CD8-positive, alpha-beta T cell (primary cell): ENCODE measurements at regions of chr7 and their contacts with region 1.

Region 1: DNA sequence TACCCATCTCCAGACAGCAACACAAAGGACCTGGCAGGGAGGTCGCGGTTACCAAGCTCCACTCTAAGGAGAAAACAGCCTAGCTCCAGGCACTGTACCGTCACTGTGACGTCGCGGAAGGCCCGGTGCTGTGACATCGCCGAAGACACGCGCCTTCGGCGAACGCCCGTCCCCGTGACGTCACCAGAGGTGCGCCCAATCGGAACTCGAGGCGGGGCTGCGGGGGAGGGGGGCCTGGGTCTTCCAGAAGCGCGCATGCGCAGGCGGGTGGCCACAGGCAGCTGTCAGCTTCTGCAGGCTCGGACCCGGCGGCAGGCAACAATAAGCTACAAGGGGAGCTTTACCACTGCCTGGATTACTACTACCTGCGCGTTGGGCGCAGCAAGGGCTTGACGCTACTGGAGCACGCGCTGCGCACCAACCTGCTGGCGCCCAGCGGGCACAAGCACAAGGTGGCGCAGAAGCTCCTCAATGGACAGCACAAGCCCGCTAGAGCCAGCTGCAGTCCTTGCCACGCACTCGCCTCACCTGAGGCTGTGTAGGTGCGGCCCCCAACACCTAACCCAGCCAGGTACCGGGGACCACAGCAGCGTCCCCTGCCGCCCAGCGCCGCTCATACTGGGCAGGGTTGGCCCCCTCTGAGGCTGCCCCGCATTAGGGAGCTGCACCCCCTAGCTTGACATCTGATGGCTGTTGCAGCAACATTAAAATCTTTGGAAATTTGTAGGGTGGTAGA is 208.4 kb downstream of the TPST1 start:
- DNase-seq: peak; percentile 62 to 91 (median 85)
- ATAC-seq: peak; percentile 86
- H3K4me3 ChIP-seq: peak overlapping the region; percentile 56 to 62
- H3K4me3 Mint-ChIP-seq: peak overlapping the region; percentile 80
- H3K27ac ChIP-seq: peak overlapping the region; percentile 39 to 43
- H3K27ac Mint-ChIP-seq: peak overlapping the region; percentile 87
- H3K4me1 ChIP-seq: peaks cover 15% of the 10 kb centered on the region
- H3K4me1 Mint-ChIP-seq: peaks cover 12% of the 10 kb centered on the region
- H3K27me3 ChIP-seq: no peaks in the 10 kb centered on the region
- H3K27me3 Mint-ChIP-seq: no peaks in the 10 kb centered on the region
- CTCF ChIP-seq: peak; percentile 50

Region 2: DNA sequence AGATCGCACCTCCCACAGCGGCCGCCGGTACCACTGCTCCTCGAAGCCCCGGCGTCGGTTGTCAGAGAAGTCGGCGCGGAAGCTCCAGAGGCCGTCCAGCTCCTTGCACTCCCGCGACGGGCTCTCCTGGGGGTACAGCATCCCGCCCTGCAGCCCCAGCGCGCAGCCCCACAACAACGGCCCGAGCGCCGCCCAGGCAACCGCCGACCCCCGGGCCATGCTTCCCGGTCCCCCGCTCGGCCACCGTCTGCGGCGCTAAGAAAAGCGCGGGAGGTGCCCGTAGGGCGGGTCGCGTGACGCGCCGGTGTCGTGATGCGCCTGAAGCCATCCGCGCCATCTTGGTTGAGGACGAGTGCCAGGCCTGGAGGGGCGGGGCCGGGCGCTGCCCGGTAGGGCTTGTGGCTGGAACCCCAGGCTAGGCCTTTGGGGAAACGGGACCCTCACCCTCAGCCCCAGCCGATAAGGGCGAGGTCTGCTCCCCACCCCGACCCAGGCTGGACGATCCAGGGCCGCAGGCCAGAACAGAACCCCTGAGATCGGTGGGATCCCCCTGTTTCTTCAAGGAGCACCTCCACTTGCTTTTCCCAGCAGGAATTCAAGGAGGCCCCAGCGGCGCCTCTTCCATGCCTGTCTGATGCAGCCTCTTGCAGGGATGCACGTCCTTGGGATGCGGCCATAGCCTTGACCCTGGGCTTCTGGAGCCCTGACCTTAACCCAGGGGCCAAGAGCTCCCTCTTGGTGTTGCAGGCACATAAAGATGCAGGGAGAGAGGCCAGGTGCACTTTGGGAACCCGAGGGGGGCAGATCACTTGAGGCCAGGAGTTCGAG is 431.4 kb before region 1 on chr7 and contains the start of gene GUSB:
- CTCF ChIA-PET with region 1: no interaction called
- POLR2A ChIA-PET with region 1: no interaction called
- intact Hi-C with region 1: loop called in 1 of 2 experiments (anchors 10 kb)
- DNase-seq: peak; percentile 80 to 93 (median 90)
- ATAC-seq: peak; percentile 87
- H3K4me3 ChIP-seq: peak within 1 kb of the TSS; percentile 83 to 90
- H3K4me3 Mint-ChIP-seq: peak within 1 kb of the TSS; percentile 85
- H3K27ac ChIP-seq: peak within 1 kb of the TSS; percentile 69 to 73
- H3K27ac Mint-ChIP-seq: peak within 1 kb of the TSS; percentile 88
- H3K4me1 ChIP-seq: peaks cover 18% of the 10 kb centered on the region
- H3K4me1 Mint-ChIP-seq: peaks cover 14% of the 10 kb centered on the region
- H3K27me3 ChIP-seq: no peaks in the 10 kb centered on the region
- H3K27me3 Mint-ChIP-seq: no peaks in the 10 kb centered on the region
- CTCF ChIP-seq: no peak
- total RNA-seq, gene GUSB: 37.0 to 41.8 TPM

Region 3: DNA sequence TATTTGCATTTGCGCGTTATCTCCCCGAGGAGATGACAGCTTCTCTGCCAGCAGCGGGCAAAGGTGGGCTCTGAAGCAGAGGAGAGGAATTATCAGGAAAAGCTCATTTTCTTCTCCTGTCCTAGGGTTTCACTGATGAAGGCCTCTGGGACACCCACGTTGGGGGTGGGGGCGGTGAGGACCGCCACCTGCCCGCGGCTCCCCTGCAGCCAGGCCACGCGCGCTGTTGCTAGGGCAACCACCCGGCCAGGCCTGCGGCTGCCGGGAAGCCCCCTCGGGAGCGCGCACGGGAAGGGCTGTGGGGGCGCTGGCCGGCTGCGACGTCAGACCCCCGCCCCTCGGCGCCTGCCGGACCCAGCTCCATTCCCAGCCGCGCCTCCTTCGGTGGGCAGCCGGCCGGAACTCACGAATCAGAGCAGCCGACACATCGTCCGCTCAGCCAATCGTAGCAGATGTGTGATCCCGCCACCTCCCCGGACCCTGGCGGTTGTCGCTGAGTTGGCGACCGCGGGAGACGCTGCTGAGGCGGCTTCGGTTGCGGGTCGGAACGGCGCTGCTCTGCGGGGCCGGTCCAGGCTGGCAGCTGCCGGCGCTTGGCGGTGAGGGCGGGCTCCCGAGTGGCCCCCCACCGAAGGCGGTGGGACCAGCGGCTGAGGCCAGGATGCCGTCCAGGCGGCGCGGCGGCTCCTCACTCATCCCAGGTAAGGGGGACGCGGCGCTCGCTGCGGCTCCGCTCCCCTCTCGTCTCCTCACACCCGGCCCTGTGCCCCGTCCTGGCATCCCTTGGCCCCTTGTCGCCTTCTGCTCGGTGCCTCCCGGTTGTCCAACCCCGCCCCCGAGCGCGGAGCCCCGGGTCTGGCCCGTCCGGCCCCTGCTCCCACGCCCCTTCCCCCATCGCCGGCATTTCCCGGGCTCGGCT is 208.5 kb before region 1 on chr7 and contains the start of gene TPST1:
- CTCF ChIA-PET with region 1: no interaction called
- POLR2A ChIA-PET with region 1: no interaction called
- intact Hi-C with region 1: loop called in 1 of 2 experiments (anchors 2 kb)
- DNase-seq: peak; percentile 61 to 90 (median 75)
- ATAC-seq: peak; percentile 89
- H3K4me3 ChIP-seq: peak within 1 kb of the TSS; percentile 59 to 84
- H3K4me3 Mint-ChIP-seq: peak within 1 kb of the TSS; percentile 89
- H3K27ac ChIP-seq: peak within 1 kb of the TSS in 1 of 2 experiments; percentile 54
- H3K27ac Mint-ChIP-seq: peak within 1 kb of the TSS; percentile 66
- H3K4me1 ChIP-seq: peaks cover 35% of the 10 kb centered on the region
- H3K4me1 Mint-ChIP-seq: peaks cover 42% of the 10 kb centered on the region
- H3K27me3 ChIP-seq: peaks cover 0 to 3% of the 10 kb centered on the region in 2 experiments
- H3K27me3 Mint-ChIP-seq: peaks cover 6% of the 10 kb centered on the region
- CTCF ChIP-seq: peak; percentile 48
- total RNA-seq, gene TPST1: 4.3 to 6.6 TPM